Activated CD8-positive, alpha-beta T cell treated with anti-CD3 and anti-CD28 coated beads for 36 hours (primary cell): ENCODE measurements at regions of chr10 and their contacts with region 1.

Region 1: GRCh38 chr10:12042797-12043651 is at the start of gene UPF2:
- DNase-seq: peak; percentile 96
- ATAC-seq: peak; percentile 92
- H3K4me3 Mint-ChIP-seq: peak within 1 kb of the TSS; percentile 100
- H3K27ac Mint-ChIP-seq: peak within 1 kb of the TSS; percentile 98
- H3K4me1 Mint-ChIP-seq: peaks cover 30% of the 10 kb centered on the region
- H3K27me3 Mint-ChIP-seq: no peaks in the 10 kb centered on the region
- CTCF ChIP-seq: no peak
- total RNA-seq, gene UPF2: 27.9 to 29.4 TPM

Region 2: DNA sequence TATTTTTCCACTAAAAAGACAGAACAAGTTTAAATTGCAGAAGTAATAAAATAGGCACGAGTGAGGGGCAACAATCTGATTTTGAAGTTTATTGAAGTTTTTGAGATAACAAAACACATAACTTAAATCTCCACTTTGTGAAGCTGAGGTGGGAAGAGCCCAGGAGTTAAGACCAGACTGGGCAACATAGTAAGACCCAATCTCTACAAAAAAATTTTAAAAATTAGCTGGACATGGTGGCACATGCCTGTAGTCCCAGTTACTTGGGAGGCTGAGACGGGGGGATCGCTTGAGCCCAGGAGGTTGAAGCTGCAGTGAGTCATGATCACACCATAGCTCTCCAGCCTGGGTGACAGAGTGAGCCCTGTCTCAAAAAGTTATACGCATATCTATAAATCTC is 11.6 kb before region 1 on chr10:
- CTCF ChIA-PET with region 1: no interaction called
- POLR2A ChIA-PET with region 1: interaction called, 26 read pairs
- intact Hi-C with region 1: no loop called
- DNase-seq: no peak
- ATAC-seq: no peak
- H3K4me3 Mint-ChIP-seq: no peak overlapping the region
- H3K27ac Mint-ChIP-seq: no peak overlapping the region
- H3K4me1 Mint-ChIP-seq: peaks cover 32% of the 10 kb centered on the region
- H3K27me3 Mint-ChIP-seq: no peaks in the 10 kb centered on the region
- CTCF ChIP-seq: no peak

Region 3: GRCh38 chr10:12129222-12130111 is 86.4 kb after region 1 on chr10 and contains the start of gene SEC61A2:
- CTCF ChIA-PET with region 1: interaction called, 3 read pairs
- POLR2A ChIA-PET with region 1: interaction called, 4 read pairs
- intact Hi-C with region 1: loop called (anchors 10 kb)
- DNase-seq: peak; percentile 96
- ATAC-seq: peak; percentile 96
- H3K4me3 Mint-ChIP-seq: peak within 1 kb of the TSS; percentile 88
- H3K27ac Mint-ChIP-seq: peak within 1 kb of the TSS; percentile 78
- H3K4me1 Mint-ChIP-seq: peaks cover 21% of the 10 kb centered on the region
- H3K27me3 Mint-ChIP-seq: no peaks in the 10 kb centered on the region
- CTCF ChIP-seq: no peak
- total RNA-seq, gene SEC61A2: 10.8 to 12.0 TPM

Region 4: DNA sequence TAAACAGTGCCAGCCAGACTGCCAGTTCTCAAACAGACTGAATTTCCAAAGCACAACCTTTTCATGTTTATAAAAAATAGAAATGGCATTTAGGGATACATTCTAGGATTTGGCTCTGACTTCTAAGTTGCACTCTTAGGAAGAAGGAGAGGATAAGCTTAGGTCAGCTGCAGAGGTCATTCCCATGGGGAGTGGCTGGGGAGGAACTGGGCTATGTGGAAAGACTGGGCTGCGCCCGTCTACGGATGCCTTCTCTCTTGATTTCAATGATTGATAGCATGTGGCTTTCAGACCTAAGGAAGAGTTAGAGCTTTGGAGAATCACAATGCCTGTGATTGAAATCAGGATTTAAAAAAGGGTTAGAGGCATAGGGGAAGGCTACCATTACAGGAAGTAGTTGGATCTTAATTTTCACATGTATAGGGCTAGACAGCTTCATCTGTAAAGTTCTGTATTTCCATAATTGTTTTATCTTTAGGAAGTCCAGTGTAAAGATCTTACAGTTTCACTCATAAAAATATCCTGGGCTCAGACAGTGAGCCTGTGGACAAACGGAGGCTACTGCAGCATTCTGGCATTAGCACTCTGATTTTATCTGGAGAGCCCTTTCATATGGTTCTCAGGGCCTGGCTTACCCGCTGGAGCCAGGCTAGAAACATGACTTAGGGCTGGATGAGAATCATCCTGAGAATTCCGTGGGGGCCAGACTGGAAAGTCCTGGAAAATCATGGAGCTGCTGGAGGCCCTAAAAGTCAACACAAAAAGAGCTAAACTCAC is 123.2 kb after region 1 on chr10:
- CTCF ChIA-PET with region 1: no interaction called
- POLR2A ChIA-PET with region 1: no interaction called
- intact Hi-C with region 1: no loop called
- DNase-seq: no peak
- ATAC-seq: no peak
- H3K4me3 Mint-ChIP-seq: no peak overlapping the region
- H3K27ac Mint-ChIP-seq: no peak overlapping the region
- H3K4me1 Mint-ChIP-seq: no peaks in the 10 kb centered on the region
- H3K27me3 Mint-ChIP-seq: no peaks in the 10 kb centered on the region
- CTCF ChIP-seq: no peak

Region 5: DNA sequence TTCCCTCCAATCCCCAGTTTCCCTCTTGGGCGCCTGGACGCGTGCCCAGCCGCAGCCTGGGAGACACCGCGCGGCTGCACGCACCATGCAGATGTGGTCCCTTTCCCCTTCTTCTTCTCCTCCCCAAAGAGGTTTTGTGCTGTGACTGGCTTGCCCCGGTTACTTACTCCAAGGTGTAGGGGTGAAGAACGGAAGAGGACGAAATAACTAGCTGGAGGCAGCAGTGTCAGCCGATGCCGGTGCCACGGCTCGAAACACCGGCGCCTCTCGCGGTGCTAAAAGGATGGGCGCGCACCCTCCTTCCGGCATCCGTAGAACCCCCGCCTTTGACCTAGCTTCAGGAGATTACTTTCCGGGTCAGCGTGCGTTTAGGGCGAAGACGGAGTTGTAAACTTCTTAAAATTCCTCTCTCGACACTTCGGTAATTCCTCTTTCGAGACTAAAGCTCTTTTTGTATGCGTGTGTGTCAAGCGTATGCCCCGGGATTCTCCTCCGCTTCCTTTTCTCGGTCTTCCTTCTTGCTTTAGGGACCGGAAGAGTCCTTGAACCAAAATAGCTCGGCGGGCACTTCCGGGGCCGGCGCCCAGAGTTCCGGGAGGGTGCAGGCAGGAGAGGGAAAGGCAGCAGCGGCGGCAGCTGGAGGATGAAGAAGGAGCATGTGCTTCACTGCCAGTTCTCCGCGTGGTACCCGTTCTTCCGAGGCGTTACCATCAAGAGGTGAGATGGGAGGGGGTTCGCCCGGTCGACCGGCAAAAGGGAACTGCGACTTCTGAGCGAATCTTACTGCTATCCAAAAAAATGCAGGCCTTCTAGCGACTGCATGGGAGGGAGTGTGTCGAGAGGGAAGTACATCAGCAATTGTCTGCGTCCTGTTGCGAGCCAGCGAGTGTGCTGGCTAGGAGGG is 152.8 kb after region 1 on chr10 and contains the starts of genes CDC123 and NUDT5:
- CTCF ChIA-PET with region 1: no interaction called
- POLR2A ChIA-PET with region 1: interaction called, 12 read pairs
- intact Hi-C with region 1: loop called (anchors 10 kb)
- DNase-seq: peak; percentile 94
- ATAC-seq: peak; percentile 95
- H3K4me3 Mint-ChIP-seq: peak within 1 kb of the TSS; percentile 95
- H3K27ac Mint-ChIP-seq: peak within 1 kb of the TSS; percentile 99
- H3K4me1 Mint-ChIP-seq: peaks cover 50% of the 10 kb centered on the region
- H3K27me3 Mint-ChIP-seq: no peaks in the 10 kb centered on the region
- CTCF ChIP-seq: no peak
- total RNA-seq, gene CDC123: 123 to 125 TPM
- total RNA-seq, gene NUDT5: 95.9 to 98.6 TPM